Colonic mucosa (tissue), 4 donors: ENCODE measurements at regions of chr6 and their contacts with region 1.

Region 1: DNA sequence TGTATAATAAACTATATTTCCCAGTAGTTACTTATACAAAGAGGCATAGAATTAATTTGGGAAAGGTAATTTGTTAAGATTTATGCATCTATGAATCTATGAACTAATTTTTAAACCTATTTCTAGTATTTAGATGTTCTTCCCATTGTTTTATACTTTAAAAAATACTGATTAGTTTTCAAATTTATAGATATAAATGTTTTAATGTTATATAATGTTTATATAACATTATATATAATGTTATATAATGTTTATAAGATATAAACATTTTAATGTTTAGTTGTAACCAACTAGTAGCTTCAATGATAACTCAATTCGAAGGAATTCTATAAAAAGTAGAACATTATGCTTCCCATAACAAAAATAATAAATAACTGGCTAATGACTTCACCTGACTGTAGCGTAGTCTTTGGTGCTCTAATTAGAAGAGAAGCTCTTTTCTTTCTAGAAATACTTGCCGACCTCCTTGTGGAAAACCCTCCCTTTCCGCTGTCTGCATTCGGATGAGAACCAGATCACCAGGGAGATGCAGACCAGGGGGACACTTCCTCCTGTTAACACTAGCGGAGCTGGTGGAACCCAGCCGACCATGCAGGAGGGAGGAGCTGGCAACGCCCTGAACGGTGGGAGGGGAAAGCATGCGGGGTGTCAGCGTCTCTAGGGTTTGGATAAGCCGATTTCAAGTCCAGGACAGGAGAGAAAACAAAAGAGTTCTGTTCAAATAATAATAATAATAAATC is 158.4 kb downstream of the OR2B2 start:
- DNase-seq: peak; percentile 86
- H3K4me3 ChIP-seq: peak overlapping the region; percentile 71
- H3K27ac ChIP-seq: no peak overlapping the region
- H3K4me1 ChIP-seq: no peaks in the 10 kb centered on the region
- H3K27me3 ChIP-seq: no peaks in the 10 kb centered on the region
- CTCF ChIP-seq: no peak

Region 2: DNA sequence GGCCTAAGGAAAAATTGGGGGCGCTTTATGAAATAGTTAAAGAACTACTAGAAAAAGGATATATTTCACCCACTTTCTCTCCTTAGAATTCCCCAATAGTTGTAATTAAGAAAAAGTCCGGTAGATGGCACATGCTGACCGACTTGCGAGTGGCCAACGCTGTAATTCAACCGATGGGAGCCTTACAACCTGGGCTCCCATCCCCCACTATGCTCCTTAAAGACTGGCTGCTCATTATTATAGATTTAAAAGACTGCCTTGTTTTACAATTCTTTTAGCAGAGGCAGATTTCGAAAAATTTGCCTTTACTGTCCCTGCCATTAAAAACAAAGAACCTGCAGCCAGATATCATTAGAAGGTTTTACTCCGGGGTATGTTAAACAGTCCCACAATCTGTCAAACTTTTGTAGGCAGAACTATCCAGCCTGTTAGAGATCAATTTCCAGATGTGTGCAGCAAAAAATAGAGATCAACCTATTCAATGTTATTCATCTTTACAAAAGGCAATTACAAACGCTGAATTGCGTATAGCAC is 564.9 kb before region 1 on chr6:
- intact Hi-C with region 1: loop called (anchors 5 kb)
- DNase-seq: peak; percentile 76
- H3K4me3 ChIP-seq: peak overlapping the region; percentile 60
- H3K27ac ChIP-seq: peak overlapping the region; percentile 80
- H3K4me1 ChIP-seq: no peaks in the 10 kb centered on the region
- H3K27me3 ChIP-seq: no peaks in the 10 kb centered on the region
- CTCF ChIP-seq: peak; percentile 66

Region 3: DNA sequence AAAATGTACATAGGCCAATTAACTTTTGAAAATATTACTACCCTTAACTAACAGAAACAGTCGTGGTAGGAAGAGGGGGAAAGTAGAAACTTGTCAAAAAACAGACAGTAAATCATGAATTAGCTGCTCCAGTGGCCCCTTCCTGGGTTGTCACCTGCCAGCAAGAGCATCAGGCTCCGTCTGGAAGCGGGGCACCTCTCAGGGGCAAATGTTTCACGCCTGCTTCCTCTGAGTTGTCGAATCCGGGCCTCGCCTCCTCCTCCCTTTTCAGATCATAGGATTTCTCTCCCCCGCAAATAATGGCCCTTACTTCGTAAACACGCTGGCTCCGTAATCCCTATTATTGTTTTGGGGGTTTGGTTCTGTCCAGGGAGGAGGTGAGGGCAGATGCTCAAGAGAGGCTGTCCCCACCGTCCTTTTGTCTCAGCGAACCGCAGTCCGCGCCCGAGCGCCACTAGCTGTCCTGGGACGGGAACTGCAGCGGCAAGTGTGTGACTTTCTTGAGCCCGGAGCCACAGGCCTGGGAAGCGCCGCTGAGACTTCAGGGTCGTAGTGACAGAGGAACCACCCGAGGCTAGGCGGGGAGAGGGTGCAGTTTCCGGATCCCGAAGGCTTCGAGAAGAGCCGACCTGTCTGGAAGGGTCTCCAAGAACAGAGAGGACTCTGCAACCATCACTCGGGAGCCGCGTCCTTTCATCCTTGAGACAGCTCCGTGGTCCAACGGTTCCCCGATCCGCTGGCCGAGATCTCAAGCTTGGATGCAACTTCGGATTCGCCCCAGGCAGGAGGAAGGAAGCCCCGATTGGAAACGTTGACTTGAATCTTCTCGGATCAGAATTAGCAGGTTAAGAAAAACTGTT is 66.5 kb before region 1 on chr6:
- intact Hi-C with region 1: loop called (anchors 5 kb)
- DNase-seq: peak; percentile 86
- H3K4me3 ChIP-seq: peak overlapping the region; percentile 45
- H3K27ac ChIP-seq: peak overlapping the region; percentile 15
- H3K4me1 ChIP-seq: no peaks in the 10 kb centered on the region
- H3K27me3 ChIP-seq: no peaks in the 10 kb centered on the region
- CTCF ChIP-seq: peak; percentile 60

Region 4: GRCh38 chr6:27700337-27700736 is 53.5 kb before region 1 on chr6:
- intact Hi-C with region 1: no loop called
- DNase-seq: no peak
- H3K4me3 ChIP-seq: no peak overlapping the region
- H3K27ac ChIP-seq: no peak overlapping the region
- H3K4me1 ChIP-seq: no peaks in the 10 kb centered on the region
- H3K27me3 ChIP-seq: no peaks in the 10 kb centered on the region
- CTCF ChIP-seq: no peak

Region 5: GRCh38 chr6:27795697-27796494 is 42.1 kb after region 1 on chr6:
- intact Hi-C with region 1: loop called (anchors 5 kb)
- DNase-seq: peak; percentile 88
- H3K4me3 ChIP-seq: no peak overlapping the region
- H3K27ac ChIP-seq: no peak overlapping the region
- H3K4me1 ChIP-seq: peaks cover 8% of the 10 kb centered on the region
- H3K27me3 ChIP-seq: no peaks in the 10 kb centered on the region
- CTCF ChIP-seq: peak; percentile 88